Stomach (tissue), 19 donors: ENCODE measurements at regions of chr19 and their contacts with region 1.

Region 1: DNA sequence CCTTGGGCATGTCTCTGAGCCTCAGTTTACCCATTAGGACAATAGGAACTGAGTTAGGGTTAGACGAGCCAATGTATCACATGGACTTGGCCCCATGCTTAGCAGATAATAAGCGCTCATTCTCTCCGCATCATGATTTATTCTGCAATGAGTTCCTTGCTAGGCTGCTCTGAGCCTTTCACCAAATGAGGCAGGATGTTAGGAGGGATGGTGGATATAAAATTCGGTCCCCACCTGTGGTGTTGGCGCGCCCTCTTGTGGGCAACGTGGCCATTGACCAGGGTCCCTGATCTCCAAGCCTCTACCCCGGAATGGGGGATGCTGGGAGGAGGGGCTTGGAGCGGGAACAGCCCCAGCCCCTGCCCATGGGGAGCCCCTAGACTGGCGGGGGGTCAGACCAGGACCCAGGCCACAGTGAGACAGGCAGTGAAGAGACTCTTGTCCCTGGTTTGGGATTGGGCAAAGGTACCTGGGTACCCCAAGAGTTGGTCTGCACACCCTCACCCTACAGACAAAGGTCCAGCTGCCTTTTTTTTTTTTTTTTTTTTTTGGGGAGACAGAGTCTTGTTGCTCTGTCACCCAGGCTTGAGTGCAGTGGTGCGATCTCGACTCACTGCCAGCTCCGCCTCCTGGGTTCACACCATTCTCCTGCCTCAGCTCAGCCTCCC is 43.9 kb downstream of the CERS4 start:
- DNase-seq: peak; percentile 87 to 94
- H3K4me3 ChIP-seq: no peak overlapping the region
- H3K27ac ChIP-seq: no peak overlapping the region
- H3K4me1 ChIP-seq: peaks cover 7 to 24% (median 19%) of the 10 kb centered on the region in 4 donors
- H3K27me3 ChIP-seq: no peaks in the 10 kb centered on the region
- CTCF ChIP-seq: peak in 5 of 7 experiments; percentile 88 to 97 (median 95)
- EP300 ChIP-seq: no peak
- POLR2A ChIP-seq: no peak

Region 2: DNA sequence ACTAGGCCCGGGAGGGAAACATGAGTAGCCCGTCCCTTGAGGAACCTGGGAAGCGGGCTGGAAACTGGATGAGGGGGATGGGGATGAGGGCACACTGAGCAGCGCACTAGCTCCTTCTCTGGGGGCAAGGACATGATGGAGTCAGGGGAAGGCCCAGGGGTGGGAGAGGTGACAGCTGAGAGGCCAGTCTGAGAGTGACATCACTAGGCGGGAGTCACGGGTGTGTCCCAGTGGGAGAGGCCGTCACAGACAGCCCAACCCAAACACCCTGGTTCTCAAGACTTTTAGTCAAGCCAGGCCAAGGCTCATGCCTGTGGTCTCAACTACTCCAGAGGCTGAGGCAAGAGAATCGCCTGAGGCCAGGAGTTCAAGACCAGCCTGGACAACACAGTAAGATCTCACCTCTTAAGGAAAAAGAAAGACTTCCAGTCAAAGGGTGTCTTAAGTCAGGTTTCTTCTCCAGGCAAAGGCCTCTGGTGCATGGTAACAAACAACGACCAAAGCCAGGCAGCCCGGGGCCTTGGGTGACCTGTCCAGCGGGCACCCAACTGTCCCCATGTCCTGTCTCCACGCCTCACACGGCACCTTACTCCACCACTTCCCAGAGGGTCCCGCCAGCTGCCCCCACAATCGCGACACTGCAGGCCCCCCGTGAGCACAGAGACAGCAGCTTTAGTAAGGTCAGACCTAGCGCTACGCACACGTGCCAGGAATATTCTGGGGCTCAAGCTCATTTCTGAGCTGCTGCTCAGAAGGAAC is 284.1 kb before region 1 on chr19:
- intact Hi-C with region 1: loop called (anchors 10 kb)
- DNase-seq: peak in 1 of 2 donors; percentile 19
- H3K4me3 ChIP-seq: no peak overlapping the region
- H3K27ac ChIP-seq: no peak overlapping the region
- H3K4me1 ChIP-seq: no peaks in the 10 kb centered on the region
- H3K27me3 ChIP-seq: no peaks in the 10 kb centered on the region
- CTCF ChIP-seq: no peak
- EP300 ChIP-seq: no peak
- POLR2A ChIP-seq: no peak

Region 3: DNA sequence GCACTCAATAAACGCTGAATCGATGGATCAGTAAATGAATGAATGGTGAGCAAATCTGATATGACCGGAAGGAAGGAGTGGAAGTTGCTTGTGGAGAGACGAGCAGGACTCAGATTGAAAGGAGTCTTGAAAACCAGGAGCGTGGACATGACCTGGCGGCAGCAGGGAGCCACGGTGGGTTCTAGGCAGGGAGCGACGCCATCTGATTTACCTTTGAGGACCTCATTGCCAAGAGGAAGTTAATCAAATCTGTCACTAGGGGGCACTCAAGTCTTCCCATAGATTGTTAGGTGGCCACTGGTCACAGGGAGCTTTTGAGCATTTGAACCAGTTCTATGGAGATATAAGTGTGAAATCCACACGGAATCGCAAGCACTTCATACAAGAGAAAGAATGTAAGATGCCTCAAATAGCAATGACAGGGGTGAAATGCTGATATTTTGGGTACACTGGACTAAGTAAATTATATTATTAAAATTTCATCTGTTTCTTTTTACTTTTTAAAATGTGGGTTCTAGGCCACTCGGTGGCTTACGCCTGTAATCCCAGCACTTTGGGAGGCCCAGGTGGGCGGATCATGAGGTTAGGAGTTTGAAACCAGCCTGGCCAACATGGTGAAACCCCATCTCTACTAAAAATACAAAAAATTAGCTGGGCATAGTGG is 94.5 kb before region 1 on chr19:
- intact Hi-C with region 1: loop called (anchors 5 kb)
- DNase-seq: peak; percentile 55 to 91
- H3K4me3 ChIP-seq: no peak overlapping the region
- H3K27ac ChIP-seq: no peak overlapping the region
- H3K4me1 ChIP-seq: peaks cover 7 to 16% (median 13%) of the 10 kb centered on the region in 4 donors
- H3K27me3 ChIP-seq: no peaks in the 10 kb centered on the region
- CTCF ChIP-seq: peak in 5 of 7 experiments; percentile 50 to 82 (median 67)
- EP300 ChIP-seq: no peak
- POLR2A ChIP-seq: no peak